HEK293 (cell line): ENCODE measurements at regions of chr1 and their contacts with region 1.

Region 1: DNA sequence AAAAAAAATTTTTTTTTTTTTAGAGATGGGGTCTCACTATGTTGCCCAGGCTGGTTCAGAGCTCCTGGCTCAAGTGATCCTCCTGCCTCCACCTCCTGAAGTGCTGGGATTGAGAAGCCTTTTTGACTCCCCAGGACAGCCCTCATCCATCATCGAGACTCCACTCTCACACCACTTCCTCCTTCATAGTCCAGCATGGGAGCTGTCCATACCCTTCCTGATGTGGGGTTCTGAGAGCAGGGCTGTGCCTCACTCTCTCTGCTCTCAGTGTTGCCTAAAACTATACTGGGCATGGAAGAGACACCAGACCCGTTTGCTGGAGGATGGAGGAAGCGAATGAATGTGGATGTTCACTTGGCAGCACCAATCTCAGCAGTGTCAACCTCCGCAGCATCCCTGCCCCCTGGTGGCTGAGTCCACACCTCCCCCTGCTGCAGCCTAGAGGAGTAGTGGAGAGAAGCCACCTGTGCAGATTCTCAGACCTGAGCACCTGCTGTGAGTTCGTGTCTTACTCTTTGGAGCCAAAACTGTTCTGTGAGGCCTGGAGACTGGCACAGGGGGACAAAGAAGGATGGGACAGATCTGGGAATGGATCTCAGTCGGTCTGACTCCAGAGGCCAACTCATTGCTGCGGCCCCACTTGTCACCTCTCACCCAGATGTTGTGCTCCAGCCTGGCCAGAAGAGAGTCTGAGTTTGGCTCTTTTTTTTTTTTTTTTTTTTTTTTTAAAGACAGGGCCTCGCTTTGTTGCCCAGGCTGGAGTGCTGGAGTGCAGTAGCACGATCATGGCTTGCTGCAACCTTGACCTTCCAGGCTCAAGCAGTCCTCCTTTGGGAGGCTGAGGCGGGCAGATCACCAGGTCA is 17.7 kb downstream of the TINAGL1 start:
- H3K4me3 ChIP-seq: no peak overlapping the region
- H3K27ac ChIP-seq: no peak overlapping the region
- H3K4me1 ChIP-seq: no peaks in the 10 kb centered on the region
- CTCF ChIP-seq: peak; percentile 87

Region 2: GRCh38 chr1:31259746-31260145 is 334.3 kb before region 1 on chr1:
- CTCF ChIA-PET with region 1: no interaction called
- POLR2A ChIA-PET with region 1: no interaction called
- H3K4me3 ChIP-seq: no peak overlapping the region
- H3K27ac ChIP-seq: no peak overlapping the region
- H3K4me1 ChIP-seq: no peaks in the 10 kb centered on the region
- CTCF ChIP-seq: no peak

Region 3: GRCh38 chr1:31564134-31564989 is 29.6 kb before region 1 on chr1:
- CTCF ChIA-PET with region 1: interaction called, 120 read pairs
- POLR2A ChIA-PET with region 1: no interaction called
- H3K4me3 ChIP-seq: no peak overlapping the region
- H3K27ac ChIP-seq: no peak overlapping the region
- H3K4me1 ChIP-seq: no peaks in the 10 kb centered on the region
- CTCF ChIP-seq: no peak

Region 4: GRCh38 chr1:31572323-31573104 is 21.5 kb before region 1 on chr1:
- CTCF ChIA-PET with region 1: interaction called, 120 read pairs
- POLR2A ChIA-PET with region 1: interaction called, 3 read pairs
- H3K4me3 ChIP-seq: no peak overlapping the region
- H3K27ac ChIP-seq: no peak overlapping the region
- H3K4me1 ChIP-seq: no peaks in the 10 kb centered on the region
- CTCF ChIP-seq: no peak

Region 5: GRCh38 chr1:31605908-31606427 is 12.0 kb after region 1 on chr1:
- CTCF ChIA-PET with region 1: interaction called, 17 read pairs
- POLR2A ChIA-PET with region 1: no interaction called
- H3K4me3 ChIP-seq: no peak overlapping the region
- H3K27ac ChIP-seq: no peak overlapping the region
- H3K4me1 ChIP-seq: no peaks in the 10 kb centered on the region
- CTCF ChIP-seq: no peak

Region 6: DNA sequence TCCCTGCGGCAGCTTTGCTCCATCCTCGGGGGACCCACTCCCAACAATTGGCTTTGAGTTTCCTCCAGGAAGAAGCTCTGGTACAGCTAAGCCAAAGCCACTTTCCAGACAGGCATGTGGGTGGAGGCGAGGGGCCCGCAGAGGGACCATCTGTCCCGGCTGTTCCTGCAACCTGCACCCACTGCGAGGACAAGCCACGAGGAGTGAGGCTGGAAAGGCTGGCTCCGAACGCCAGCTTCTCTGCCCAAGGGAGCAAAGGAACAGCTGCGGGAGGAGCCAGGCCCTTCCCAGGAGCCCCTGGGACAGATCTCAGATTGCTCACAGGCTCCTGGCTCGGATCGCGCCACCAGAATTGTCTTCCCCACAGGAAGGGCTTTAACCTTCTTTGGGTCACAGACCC is 79.0 kb after region 1 on chr1:
- CTCF ChIA-PET with region 1: no interaction called
- POLR2A ChIA-PET with region 1: no interaction called
- H3K4me3 ChIP-seq: no peak overlapping the region
- H3K27ac ChIP-seq: no peak overlapping the region
- H3K4me1 ChIP-seq: peaks cover 5% of the 10 kb centered on the region
- CTCF ChIP-seq: no peak

Region 7: GRCh38 chr1:31923901-31924535 is 330.0 kb after region 1 on chr1:
- CTCF ChIA-PET with region 1: no interaction called
- POLR2A ChIA-PET with region 1: no interaction called
- H3K4me3 ChIP-seq: no peak overlapping the region
- H3K27ac ChIP-seq: no peak overlapping the region
- H3K4me1 ChIP-seq: peaks cover 27% of the 10 kb centered on the region
- CTCF ChIP-seq: no peak